IMR-90 (cell line): ENCODE measurements at regions of chr2 and their contacts with region 1.

Region 1: DNA sequence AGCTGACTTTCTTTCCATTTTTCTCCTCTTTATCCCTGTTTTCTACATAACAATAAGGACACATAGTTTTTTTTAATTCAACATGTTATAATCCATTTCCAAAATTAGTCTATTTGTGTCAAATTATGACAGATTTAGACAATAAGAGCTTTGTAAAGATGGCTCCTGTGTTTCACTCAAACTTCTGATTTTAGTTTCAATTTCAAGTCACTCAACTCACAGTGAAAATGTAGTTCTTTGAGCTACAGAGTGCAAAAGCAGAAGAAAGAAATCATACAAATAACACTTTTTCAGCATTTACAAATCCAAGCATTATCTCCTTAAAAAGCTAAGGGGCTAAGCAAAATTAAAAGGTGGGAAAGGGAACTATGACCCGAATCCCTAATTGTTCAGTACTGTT is 340.7 kb upstream of the TRIB2 start:
- DNase-seq: no peak
- ATAC-seq: no peak
- H3K4me3 ChIP-seq: no peak overlapping the region
- H3K27ac ChIP-seq: no peak overlapping the region
- H3K4me1 ChIP-seq: no peaks in the 10 kb centered on the region
- H3K27me3 ChIP-seq: no peaks in the 10 kb centered on the region
- CTCF ChIP-seq: no peak
- POLR2A ChIP-seq: no peak
- RAD21 ChIP-seq: no peak

Region 2: GRCh38 chr2:12352889-12353288 is 23.1 kb before region 1 on chr2:
- CTCF ChIA-PET with region 1: no interaction called
- POLR2A ChIA-PET with region 1: no interaction called
- dilution Hi-C with region 1: no loop called
- in situ Hi-C with region 1: no loop called
- intact Hi-C with region 1: loop called (anchors 1 kb)
- DNase-seq: peak; percentile 6
- ATAC-seq: no peak
- H3K4me3 ChIP-seq: no peak overlapping the region
- H3K27ac ChIP-seq: no peak overlapping the region
- H3K4me1 ChIP-seq: no peaks in the 10 kb centered on the region
- H3K27me3 ChIP-seq: 0 out of 2 replicates have a peak, but pooled peaks cover 1% of the 10 kb centered on the region
- CTCF ChIP-seq: no peak
- POLR2A ChIP-seq: no peak
- RAD21 ChIP-seq: no peak